CD8-positive, alpha-beta memory T cell (primary cell): ENCODE measurements at regions of chr12 and their contacts with region 1.

Region 1: DNA sequence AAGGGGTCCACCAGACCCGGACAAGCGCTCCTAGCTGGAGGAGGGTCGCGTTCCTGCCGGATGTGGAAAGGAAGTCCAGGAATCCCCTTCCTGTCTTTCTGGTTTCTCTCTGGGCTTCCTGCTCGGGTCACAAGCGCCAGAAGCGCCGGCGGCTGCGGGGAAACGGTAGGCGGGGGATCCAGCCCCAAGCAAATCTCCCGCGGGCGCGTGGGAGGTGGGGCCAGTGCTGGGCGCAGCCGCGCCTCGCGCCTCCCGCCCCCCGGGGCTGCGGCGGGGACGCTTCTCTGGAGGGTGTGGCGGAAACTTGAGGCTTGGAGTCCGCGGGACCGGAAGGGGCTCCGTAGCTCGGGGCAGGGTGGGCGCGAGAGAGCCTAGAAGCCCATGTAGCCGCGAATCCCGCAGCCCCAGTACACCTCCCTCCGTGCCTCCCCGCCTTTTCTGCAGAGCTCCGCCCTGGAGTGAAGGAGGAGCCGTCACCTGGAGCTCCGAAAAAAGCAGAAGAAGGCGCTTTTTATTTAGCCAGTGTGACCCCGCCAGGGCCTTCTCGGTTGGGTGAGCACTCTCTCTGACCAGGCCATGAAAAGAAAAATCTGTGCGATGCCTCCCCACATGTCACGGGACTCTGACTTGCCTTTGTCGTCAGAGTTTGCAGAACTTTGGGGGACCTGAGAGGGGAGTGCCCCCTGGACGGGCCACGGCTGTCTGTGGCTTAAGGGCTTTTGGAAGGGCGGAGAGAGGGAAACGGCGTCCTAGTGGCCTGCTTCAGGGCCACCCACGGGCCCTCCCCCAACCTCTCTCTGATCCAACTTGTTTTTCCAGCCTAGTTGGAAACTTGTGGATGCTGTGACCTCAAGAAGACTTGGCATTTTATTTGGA is 21.4 kb upstream of the CLEC2D start:
- DNase-seq: peak; percentile 86 to 97 (median 95)
- H3K4me3 ChIP-seq: peak overlapping the region; percentile 92
- H3K4me3 Mint-ChIP-seq: peak overlapping the region; percentile 85 to 99 (median 96)
- H3K27ac ChIP-seq: peak overlapping the region; percentile 93
- H3K27ac Mint-ChIP-seq: peak overlapping the region; percentile 90 to 99 (median 98)
- H3K4me1 ChIP-seq: peaks cover 50% of the 10 kb centered on the region
- H3K4me1 Mint-ChIP-seq: peaks cover 54 to 71% (median 69%) of the 10 kb centered on the region in 3 donors
- H3K27me3 ChIP-seq: no peaks in the 10 kb centered on the region
- H3K27me3 Mint-ChIP-seq: peaks cover 0 to 7% of the 10 kb centered on the region in 2 donors

Region 2: DNA sequence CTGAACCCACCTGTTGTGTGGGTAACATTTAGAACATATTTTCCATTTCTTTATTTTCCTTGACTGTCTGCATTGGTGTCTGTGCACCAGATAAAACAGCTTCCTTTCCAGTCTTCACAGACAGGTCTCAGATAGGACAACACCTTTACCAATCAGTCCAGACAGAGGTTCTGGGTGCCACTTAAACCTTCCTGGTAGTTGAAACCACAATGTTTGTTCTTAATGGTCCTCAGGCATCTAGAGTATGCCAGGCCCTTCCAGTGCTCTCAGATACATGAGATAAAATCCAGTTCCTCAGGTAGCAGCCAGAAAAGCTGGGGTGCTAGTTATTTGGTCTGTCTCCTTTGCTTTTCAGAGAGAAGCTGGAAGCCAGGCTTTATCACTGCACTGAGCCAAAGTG is 14.4 kb after region 1 on chr12:
- CTCF ChIA-PET with region 1: interaction called, 6 read pairs
- POLR2A ChIA-PET with region 1: interaction called, 44 read pairs
- DNase-seq: no peak
- H3K4me3 ChIP-seq: peak overlapping the region; percentile 16
- H3K4me3 Mint-ChIP-seq: peak overlapping the region; percentile 4 to 64 (median 55)
- H3K27ac ChIP-seq: no peak overlapping the region
- H3K27ac Mint-ChIP-seq: peak overlapping the region; percentile 39 to 94 (median 85)
- H3K4me1 ChIP-seq: peaks cover 88% of the 10 kb centered on the region
- H3K4me1 Mint-ChIP-seq: peaks cover 73 to 96% (median 96%) of the 10 kb centered on the region in 3 donors
- H3K27me3 ChIP-seq: no peaks in the 10 kb centered on the region
- H3K27me3 Mint-ChIP-seq: no peaks in the 10 kb centered on the region

Region 3: DNA sequence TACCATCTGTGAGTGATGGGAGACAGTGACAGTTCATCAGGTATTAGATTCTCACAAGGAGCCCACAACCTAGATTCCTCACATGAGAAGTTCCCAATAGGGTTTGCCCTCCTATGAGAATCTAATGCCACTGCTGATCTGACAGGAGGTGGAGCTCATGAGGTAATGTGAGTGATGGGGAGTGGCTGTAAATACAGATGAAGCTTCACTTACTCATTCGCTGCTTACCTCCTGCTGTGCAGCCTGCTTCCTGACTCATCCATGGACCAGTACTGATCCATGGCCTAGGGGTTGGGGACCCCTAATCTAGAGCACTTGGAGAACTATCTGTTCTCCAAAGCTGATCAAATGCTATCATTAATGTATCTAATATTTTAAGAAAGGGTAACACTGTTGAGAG is 39.2 kb after region 1 on chr12:
- CTCF ChIA-PET with region 1: interaction called, 6 read pairs
- POLR2A ChIA-PET with region 1: interaction called, 13 read pairs
- DNase-seq: no peak
- H3K4me3 ChIP-seq: no peak overlapping the region
- H3K4me3 Mint-ChIP-seq: peak overlapping the region in 6 of 7 donors; percentile 3 to 73 (median 52)
- H3K27ac ChIP-seq: no peak overlapping the region
- H3K27ac Mint-ChIP-seq: peak overlapping the region in 7 of 8 donors; percentile 68 to 96 (median 74)
- H3K4me1 ChIP-seq: peaks cover 48% of the 10 kb centered on the region
- H3K4me1 Mint-ChIP-seq: peaks cover 64 to 89% (median 84%) of the 10 kb centered on the region in 3 donors
- H3K27me3 ChIP-seq: no peaks in the 10 kb centered on the region
- H3K27me3 Mint-ChIP-seq: peaks cover 0 to 1% of the 10 kb centered on the region in 2 donors

Region 4: GRCh38 chr12:9707864-9708808 is 60.1 kb after region 1 on chr12:
- CTCF ChIA-PET with region 1: interaction called, 20 read pairs
- POLR2A ChIA-PET with region 1: interaction called, 17 read pairs
- DNase-seq: peak; percentile 48 to 80 (median 66)
- H3K4me3 ChIP-seq: peak overlapping the region; percentile 18
- H3K4me3 Mint-ChIP-seq: peak overlapping the region; percentile 38 to 83 (median 73)
- H3K27ac ChIP-seq: no peak overlapping the region
- H3K27ac Mint-ChIP-seq: peak overlapping the region; percentile 75 to 95 (median 92)
- H3K4me1 ChIP-seq: peaks cover 41% of the 10 kb centered on the region
- H3K4me1 Mint-ChIP-seq: peaks cover 56 to 74% (median 63%) of the 10 kb centered on the region in 3 donors
- H3K27me3 ChIP-seq: no peaks in the 10 kb centered on the region
- H3K27me3 Mint-ChIP-seq: no peaks in the 10 kb centered on the region

Region 5: GRCh38 chr12:9760699-9761418 is 112.8 kb after region 1 on chr12 and contains the start of gene CD69:
- CTCF ChIA-PET with region 1: interaction called, 6 read pairs
- POLR2A ChIA-PET with region 1: interaction called, 12 read pairs
- DNase-seq: peak; percentile 66 to 89 (median 85)
- H3K4me3 ChIP-seq: peak within 1 kb of the TSS; percentile 68
- H3K4me3 Mint-ChIP-seq: peak within 1 kb of the TSS; percentile 93 to 100 (median 98)
- H3K27ac ChIP-seq: peak within 1 kb of the TSS; percentile 96
- H3K27ac Mint-ChIP-seq: peak within 1 kb of the TSS; percentile 97 to 100 (median 99)
- H3K4me1 ChIP-seq: peaks cover 49% of the 10 kb centered on the region
- H3K4me1 Mint-ChIP-seq: peaks cover 58 to 72% (median 71%) of the 10 kb centered on the region in 3 donors
- H3K27me3 ChIP-seq: no peaks in the 10 kb centered on the region
- H3K27me3 Mint-ChIP-seq: no peaks in the 10 kb centered on the region
- total RNA-seq, gene CD69: 66.8 to 67.1 TPM